ENCODE measurements at regions of chr5 and their contacts with region 1.

Region 1: DNA sequence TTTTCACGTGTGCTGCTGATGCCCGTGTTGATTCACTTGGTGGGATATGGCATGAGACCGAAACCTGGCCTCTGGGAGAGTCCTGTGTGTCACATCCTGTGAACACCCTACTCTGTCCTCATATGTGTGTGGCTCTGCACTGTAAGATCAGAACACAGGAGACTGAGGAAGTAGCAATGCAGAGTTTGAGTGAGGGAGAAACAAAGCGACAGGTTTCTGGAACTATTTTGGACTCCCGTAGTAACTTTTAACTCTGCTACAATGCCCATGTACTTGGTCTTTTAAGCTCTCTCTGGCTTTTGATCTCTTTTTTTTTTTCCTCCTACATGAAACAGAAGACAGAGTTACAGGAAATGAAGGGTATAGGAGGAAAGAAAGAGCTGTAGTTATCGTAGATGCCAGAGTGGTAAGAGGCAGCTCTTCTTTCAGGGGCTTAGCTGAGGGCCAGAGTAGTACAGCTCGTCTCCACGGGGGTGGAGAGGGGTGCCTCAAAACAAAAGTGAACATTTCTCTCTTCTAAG is 26.6 kb downstream of the GRAMD2B start:
- DNase-seq: peak; percentile 55
- H3K4me3 Mint-ChIP-seq: peak overlapping the region; percentile 82
- H3K27ac Mint-ChIP-seq: peak overlapping the region; percentile 99
- H3K4me1 Mint-ChIP-seq: peaks cover 67% of the 10 kb centered on the region
- H3K27me3 Mint-ChIP-seq: no peaks in the 10 kb centered on the region

Region 2: DNA sequence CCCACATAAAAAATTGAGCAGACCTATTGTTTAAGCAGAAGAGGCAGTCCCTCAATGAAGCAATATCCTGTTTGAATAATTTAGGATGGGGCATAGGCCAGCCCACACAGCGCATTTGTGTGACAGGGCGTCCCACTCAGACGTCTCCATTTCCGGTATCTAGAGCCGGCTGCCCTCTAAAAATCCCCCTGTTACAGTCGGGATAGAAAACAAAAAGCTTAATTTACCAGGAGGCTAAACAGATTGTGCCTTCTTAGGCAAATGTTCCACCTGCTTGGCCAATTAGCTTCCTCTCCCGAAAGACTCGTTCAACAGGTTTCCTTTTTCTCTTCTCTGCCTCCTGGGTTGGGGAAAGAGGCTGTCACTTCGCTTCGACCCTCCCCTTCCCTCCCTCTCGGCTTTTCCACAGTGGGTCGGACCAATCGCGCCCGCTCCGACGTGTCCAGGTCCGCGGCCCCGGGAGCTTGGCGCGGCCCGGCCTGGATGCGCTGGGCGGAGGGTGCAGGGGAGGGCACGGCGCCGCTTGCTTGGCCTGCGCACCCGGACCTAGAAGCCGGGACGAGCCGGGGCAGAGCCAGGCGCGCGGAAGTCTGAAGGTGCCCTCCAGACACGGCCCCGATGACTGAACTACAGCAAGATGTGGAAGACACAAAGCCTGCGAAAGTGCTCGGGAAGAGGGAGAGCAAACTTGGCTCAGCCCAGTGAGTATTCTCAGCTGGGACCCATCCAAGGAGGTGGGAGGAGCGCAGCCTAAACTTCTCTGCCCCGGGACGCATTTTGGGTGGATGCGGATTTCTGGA is 26.6 kb before region 1 on chr5 and contains the start of gene GRAMD2B:
- intact Hi-C with region 1: loop called (anchors 1 kb)
- DNase-seq: peak; percentile 58
- H3K4me3 Mint-ChIP-seq: peak within 1 kb of the TSS; percentile 89
- H3K27ac Mint-ChIP-seq: peak within 1 kb of the TSS; percentile 85
- H3K4me1 Mint-ChIP-seq: peaks cover 29% of the 10 kb centered on the region
- H3K27me3 Mint-ChIP-seq: no peaks in the 10 kb centered on the region
- total RNA-seq, gene GRAMD2B: 8.4 and 8.8 TPM in 2 replicates

Region 3: GRCh38 chr5:126499853-126500342 is 50.1 kb after region 1 on chr5:
- intact Hi-C with region 1: loop called (anchors 5 kb)
- DNase-seq: no peak
- H3K4me3 Mint-ChIP-seq: no peak overlapping the region
- H3K27ac Mint-ChIP-seq: no peak overlapping the region
- H3K4me1 Mint-ChIP-seq: peaks cover 6% of the 10 kb centered on the region
- H3K27me3 Mint-ChIP-seq: no peaks in the 10 kb centered on the region

Region 4: DNA sequence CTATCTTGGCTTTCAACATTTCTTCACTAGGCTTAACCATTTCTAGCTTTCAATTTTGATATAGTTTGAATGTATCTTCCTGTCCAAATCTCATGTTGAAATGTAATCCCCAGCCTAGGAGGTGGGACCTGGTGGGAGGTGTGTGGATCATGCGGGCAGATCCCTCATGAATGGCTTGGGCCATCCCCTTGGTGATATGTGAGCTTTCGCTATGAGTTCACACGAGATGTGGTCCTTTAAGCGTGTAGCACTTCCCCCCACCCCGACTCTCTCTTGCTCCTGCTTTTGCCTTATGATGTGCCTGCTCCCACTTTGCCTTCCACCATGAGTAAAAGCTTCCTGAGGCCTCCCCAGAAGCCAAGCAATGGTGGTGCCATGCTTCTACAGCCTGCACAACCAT is 191.6 kb after region 1 on chr5:
- intact Hi-C with region 1: no loop called
- DNase-seq: no peak
- H3K4me3 Mint-ChIP-seq: no peak overlapping the region
- H3K27ac Mint-ChIP-seq: no peak overlapping the region
- H3K4me1 Mint-ChIP-seq: peaks cover 2% of the 10 kb centered on the region
- H3K27me3 Mint-ChIP-seq: peaks cover 3% of the 10 kb centered on the region

Region 5: DNA sequence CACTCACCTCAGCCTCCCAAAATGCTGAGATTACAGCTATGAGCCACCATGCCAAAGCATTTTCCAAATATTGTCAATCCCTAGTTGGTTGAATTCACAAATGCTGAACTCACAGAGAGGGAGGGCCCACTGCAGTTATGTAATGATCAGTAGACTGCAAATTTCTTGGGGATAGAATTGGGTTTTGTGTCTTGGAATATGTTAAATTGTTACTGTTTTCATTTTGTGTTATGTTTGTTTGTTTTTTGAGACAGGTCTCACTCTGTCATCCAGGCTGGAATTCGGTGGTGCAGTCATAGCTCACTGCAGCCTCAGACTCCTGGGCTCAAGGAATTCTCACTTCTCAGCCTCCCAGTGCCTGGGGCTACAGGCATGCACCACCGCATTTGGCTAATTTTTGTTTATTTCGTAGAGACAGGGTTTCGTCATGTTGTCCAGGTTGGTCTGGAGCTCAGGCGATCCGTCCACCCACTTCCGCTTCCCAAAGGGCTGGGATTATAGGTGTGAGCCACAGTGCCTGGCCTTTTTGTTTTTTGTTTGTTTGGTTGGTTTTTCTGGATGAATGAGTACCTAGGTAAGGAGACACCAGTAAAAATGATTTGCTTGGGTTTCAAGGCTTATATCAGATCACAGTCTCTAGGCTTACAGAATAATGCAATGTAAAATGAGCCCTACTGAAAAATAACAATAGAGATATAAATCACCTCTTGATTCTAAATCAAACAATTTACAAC is 295.6 kb after region 1 on chr5:
- intact Hi-C with region 1: loop called (anchors 10 kb)
- DNase-seq: no peak
- H3K4me3 Mint-ChIP-seq: no peak overlapping the region
- H3K27ac Mint-ChIP-seq: peak overlapping the region; percentile 43
- H3K4me1 Mint-ChIP-seq: peaks cover 46% of the 10 kb centered on the region
- H3K27me3 Mint-ChIP-seq: peaks cover 2% of the 10 kb centered on the region

Region 6: DNA sequence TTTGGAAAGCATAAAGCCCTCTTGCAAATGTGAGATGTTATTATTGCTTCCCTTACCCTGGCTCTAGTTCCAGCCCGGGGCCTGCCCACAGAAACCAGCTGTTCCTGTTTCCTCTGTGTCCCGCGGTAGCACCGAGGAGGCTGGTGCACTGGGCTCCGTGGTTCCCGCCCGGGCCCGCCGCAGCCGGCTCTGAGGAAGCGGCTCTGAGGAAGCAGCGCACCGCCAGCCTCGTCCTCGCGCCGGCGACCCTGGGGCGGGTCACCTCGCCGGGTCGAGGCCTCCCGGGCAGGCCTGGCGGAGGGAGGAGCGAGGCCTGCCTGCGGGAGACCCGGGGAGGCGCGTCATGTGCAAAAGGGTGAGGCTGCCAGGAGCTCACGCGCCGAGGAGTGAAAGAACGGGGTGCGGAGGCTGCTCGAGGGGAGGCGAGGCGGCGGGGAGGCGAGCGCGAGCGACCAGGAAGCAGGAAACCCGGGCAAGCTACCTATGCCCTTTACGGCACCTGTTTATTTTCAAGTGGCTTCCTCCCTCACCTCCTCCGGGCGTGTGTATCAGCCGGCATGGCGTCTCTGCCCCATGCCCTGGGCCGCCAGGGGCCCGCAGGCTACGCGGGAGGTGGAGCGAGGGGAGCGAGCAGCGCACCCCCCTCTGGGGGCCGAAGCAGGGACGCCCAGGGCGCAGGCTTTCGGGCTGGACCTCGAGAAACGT is 779.5 kb after region 1 on chr5:
- intact Hi-C with region 1: no loop called
- DNase-seq: peak; percentile 41
- H3K4me3 Mint-ChIP-seq: peak overlapping the region; percentile 45
- H3K27ac Mint-ChIP-seq: no peak overlapping the region
- H3K4me1 Mint-ChIP-seq: peaks cover 8% of the 10 kb centered on the region
- H3K27me3 Mint-ChIP-seq: peaks cover 11% of the 10 kb centered on the region

Measured in activated T-helper 2 cell treated with anti-CD3 and anti-CD28 coated beads, Interferon-gamma antibody, Interleukin-2, Interleukin-4, amounts not matched to agents 10 μg/mL and 5 μg/mL and 100 μg/mL, durations not matched to agents 14 hours and 24 hours and 36 hours (primary cell).